GM18951 (cell line): ENCODE measurements at regions of chr3 and their contacts with region 1.

Region 1: GRCh38 chr3:73056014-73056844 is 5.2 kb upstream of the EBLN2 start:
- POLR2A ChIP-seq: no peak

Region 2: DNA sequence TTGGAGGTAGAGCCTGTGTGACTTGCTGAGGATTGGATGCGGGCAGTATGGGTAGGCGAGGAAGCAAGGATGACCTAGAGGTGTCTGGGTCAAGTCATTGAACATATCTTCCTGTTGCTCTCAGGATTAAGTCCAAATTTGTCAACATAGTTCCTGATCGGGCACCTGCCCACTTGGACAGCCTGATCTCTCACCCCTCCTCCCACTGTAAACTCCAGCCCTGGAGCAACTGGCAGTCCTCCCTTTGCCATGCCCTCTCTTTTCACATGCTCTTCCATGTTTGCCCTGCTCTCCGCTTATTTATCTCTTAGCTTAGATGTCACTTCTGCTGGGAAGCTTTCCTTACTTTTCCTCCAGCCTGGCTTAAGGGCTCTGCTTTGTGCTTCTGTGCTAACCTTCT is 107.2 kb before region 1 on chr3:
- in situ Hi-C with region 1: loop called (anchors 10 kb)
- POLR2A ChIP-seq: no peak